ENCODE measurements at regions of chr1 and their contacts with region 1.

Region 1: GRCh38 chr1:27192039-27192529 is 37.2 kb upstream of the SLC9A1 start:
- DNase-seq: peak; percentile 30
- H3K4me3 ChIP-seq: no peak overlapping the region
- H3K27ac ChIP-seq: peak overlapping the region in 5 of 8 donors; percentile 29 to 58 (median 37)
- H3K4me1 ChIP-seq: peaks cover 0 to 25% (median under 1%) of the 10 kb centered on the region in 6 donors
- H3K27me3 ChIP-seq: no peaks in the 10 kb centered on the region
- CTCF ChIP-seq: no peak
- POLR2A ChIP-seq: no peak

Region 2: DNA sequence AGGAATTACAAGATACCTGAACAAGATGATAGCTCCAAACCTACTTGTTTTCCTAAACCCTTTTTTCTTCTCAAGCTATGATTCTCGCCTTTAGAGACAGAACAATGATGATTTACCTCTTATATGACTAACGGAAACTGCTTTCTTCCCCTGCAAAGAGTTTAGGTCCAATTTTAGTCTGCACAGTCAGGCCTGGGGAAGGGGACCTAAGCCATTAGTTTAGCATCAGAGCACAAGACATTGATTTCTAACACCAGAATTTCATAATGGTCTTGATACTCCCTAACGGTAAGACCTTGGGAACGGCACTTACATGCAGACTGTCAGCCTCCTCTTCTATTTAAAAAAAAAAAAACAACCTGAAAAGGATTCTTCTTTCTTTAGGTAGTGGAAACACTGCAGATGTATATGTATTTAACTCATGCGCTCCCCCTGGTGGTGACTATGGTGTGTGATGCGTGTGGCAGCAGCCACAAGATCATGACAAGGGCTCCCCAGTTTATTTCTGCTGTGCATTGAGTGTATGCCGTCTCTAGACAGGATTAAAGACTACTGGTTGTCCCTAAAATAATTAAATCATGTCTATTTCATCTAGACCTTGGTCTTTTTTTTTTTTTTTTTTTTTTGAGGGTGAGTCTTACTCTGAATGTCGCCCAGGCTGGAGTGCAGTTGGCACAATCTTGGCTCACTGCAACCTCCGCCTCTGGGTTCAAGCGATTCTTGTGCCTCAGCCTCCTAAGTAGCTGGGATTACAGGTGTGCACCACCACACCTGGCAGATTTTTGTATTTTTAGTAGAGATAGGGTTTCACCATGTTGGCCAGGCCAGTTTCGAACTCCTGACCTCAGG is 92.6 kb after region 1 on chr1:
- intact Hi-C with region 1: loop called (anchors 5 kb)
- DNase-seq: peak; percentile 93
- H3K4me3 ChIP-seq: no peak overlapping the region
- H3K27ac ChIP-seq: peak overlapping the region in 2 of 8 donors; percentile 1 to 28
- H3K4me1 ChIP-seq: peaks cover 0 to 22% (median 2%) of the 10 kb centered on the region in 6 donors
- H3K27me3 ChIP-seq: no peaks in the 10 kb centered on the region
- CTCF ChIP-seq: peak; percentile 82 to 95 (median 90)
- POLR2A ChIP-seq: no peak

Measured in spleen (tissue), 13 donors.